Heart left ventricle (tissue), 16 donors: ENCODE measurements at regions of chr6 and their contacts with region 1.

Region 1: GRCh38 chr6:47309291-47310130 is at the start of gene TNFRSF21:
- DNase-seq: peak; percentile 92 to 94 (median 93)
- ATAC-seq: peak; percentile 98 to 100 (median 99)
- H3K4me3 ChIP-seq: peak within 1 kb of the TSS; percentile 60 to 79 (median 74)
- H3K27ac ChIP-seq: peak within 1 kb of the TSS; percentile 23 to 87 (median 62)
- H3K4me1 ChIP-seq: peaks cover 0 to 12% (median 3%) of the 10 kb centered on the region in 12 donors
- H3K27me3 ChIP-seq: peaks cover 0 to 32% (median 15%) of the 10 kb centered on the region in 9 donors
- CTCF ChIP-seq: peak; percentile 88 to 98 (median 96)
- POLR2A ChIP-seq: peak in 1 of 2 donors; percentile 75
- total RNA-seq, gene TNFRSF21: 3.7 to 18.1 (median 6.0) TPM

Region 2: GRCh38 chr6:46848684-46849360 is 460.7 kb before region 1 on chr6:
- intact Hi-C with region 1: loop called in 8 of 10 experiments (anchors 2 to 10 kb)
- DNase-seq: peak; percentile 84 to 94 (median 87)
- ATAC-seq: peak; percentile 65 to 96 (median 95)
- H3K4me3 ChIP-seq: peak overlapping the region in 5 of 12 donors; percentile 3 to 32 (median 26)
- H3K27ac ChIP-seq: no peak overlapping the region
- H3K4me1 ChIP-seq: peaks cover 0 to 44% (median 13%) of the 10 kb centered on the region in 12 donors
- H3K27me3 ChIP-seq: no peaks in the 10 kb centered on the region
- CTCF ChIP-seq: peak; percentile 93 to 99 (median 98)
- POLR2A ChIP-seq: no peak

Region 3: DNA sequence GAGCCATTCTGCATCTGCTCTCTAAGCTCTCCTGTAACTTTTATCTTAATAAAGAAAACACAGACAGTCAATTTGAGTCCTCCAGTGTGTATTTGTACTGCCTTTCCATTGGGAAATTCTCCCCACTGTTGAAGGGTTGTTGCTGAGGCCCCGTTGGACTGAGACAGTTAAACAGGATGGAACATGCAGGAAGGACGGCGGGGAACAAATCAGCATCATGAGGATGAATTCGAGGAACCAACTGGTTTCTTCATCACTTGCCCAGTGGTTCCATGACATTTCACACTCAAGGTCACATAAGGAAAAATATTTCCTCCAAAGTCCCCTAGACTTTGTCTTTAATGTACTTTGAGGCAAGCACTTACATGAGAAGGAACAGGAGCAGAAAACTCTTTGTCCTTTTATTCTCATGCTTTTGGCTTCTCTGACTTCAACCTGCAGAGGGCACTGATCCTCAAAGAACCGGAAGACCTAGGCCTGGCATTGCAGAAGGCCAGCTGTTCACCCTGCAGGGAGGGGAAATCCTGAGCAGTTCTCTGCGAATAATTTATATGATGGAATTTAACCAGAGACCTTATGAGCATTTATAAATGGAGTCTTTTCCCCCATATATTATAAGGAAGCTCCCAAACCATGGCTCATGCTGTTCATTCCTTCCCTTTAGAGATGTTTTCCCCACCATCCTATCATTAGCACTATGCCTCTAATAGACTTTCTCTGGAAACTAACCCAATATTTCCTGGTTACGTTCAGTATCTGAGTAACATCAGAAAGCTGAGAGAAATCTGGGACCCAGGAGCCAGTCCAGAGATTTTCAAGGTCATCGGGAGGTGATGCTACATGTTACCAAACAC is 212.2 kb before region 1 on chr6:
- intact Hi-C with region 1: loop called (anchors 1 to 2 kb)
- DNase-seq: peak in 4 of 5 donors; percentile 59 to 75 (median 68)
- ATAC-seq: peak; percentile 70 to 92 (median 90)
- H3K4me3 ChIP-seq: no peak overlapping the region
- H3K27ac ChIP-seq: peak overlapping the region in 2 of 12 donors; percentile 10 to 25
- H3K4me1 ChIP-seq: peaks cover 0 to 27% (median 8%) of the 10 kb centered on the region in 12 donors
- H3K27me3 ChIP-seq: no peaks in the 10 kb centered on the region
- CTCF ChIP-seq: peak; percentile 46 to 76 (median 64)
- POLR2A ChIP-seq: no peak

Region 4: DNA sequence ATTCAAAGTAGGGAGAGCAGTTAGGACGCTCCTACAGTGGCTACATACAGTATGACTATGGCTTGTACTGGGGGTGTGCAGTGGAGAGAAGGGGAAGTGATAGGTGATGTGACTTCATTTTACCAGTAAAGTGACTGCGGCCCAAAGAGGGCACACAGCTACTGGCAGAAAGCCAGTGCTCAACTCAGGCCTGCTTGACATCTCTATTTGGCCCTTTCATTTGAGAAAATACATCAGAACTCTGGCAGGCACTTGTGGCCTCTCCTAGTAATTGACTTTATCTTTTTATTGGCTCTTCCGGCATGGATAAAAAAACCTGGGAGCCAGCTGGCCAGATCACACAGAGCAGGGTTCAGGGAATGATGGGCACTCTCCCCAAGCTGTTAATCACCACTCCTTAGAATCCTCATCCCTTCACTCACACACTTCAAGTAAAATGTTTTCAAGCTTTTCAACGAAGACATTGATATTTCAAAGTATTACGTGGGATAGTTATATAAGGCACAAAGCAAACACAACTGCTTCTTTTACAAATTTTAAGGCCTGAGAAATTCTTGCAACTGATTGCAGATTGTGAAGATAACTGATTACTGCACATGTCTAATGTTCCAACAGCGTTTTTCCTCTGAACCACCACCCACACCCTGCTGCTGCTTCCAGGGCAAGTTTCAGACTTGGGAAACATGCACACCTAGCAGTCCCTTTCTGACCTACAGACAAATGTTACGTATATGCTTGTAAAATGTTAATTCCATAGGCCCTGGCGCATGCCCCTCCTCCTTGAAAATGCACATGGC is 73.3 kb before region 1 on chr6:
- intact Hi-C with region 1: loop called in 2 of 10 experiments (anchors 5 to 10 kb)
- DNase-seq: peak in 3 of 5 donors; percentile 28 to 57 (median 32)
- ATAC-seq: peak; percentile 70 to 90 (median 74)
- H3K4me3 ChIP-seq: no peak overlapping the region
- H3K27ac ChIP-seq: peak overlapping the region in 1 of 12 donors; percentile 23
- H3K4me1 ChIP-seq: peaks cover 0 to 23% (median 8%) of the 10 kb centered on the region in 12 donors
- H3K27me3 ChIP-seq: no peaks in the 10 kb centered on the region
- CTCF ChIP-seq: no peak
- POLR2A ChIP-seq: no peak

Region 5: DNA sequence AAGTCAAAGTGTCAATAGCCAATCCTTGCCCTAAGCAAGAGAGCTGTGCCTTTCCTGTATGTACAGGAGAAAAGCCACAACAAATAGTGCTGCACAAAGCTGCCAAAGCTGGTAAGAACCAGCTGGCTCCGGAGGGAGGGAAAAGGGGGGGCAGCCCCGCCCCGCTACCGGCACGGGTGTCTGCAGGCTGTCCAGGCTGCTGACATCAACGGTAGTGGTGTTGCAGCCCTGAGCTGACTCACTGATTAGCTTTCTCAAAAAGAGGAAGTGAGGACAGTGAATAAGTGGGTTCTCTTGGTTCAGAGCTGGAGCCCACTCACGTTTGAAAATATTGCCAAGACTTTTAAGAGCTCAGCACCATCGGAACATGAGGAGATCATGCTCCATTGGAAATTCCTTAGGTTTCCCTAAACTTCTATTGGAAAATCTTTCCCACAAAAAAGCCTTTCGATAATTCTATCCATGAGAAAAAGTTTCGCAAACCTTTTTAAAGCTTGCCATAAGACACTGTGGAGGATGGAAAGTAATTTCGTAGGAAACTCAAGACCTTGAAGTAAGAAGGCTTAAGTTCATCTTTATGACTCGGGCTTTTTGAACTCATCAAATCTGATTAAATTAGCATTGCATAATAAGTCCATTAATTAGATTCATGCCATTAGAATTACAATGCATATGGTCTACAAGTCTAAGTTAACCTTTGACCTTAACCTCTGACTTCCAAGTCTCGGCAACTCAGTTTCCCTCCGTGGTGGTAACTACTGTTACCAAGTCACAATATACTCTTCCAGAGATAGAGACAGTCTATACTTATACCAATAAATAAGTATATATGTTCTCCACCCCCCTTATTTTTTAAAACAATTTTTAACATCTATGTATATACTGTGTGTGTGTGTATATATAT is 66.8 kb before region 1 on chr6:
- intact Hi-C with region 1: loop called in 5 of 10 experiments (anchors 5 to 10 kb)
- DNase-seq: peak; percentile 85 to 92 (median 90)
- ATAC-seq: peak; percentile 96 to 99 (median 98)
- H3K4me3 ChIP-seq: peak overlapping the region in 1 of 12 donors; percentile 6
- H3K27ac ChIP-seq: peak overlapping the region in 8 of 12 donors; percentile 1 to 72 (median 34)
- H3K4me1 ChIP-seq: peaks cover 0 to 43% (median 29%) of the 10 kb centered on the region in 12 donors
- H3K27me3 ChIP-seq: no peaks in the 10 kb centered on the region
- CTCF ChIP-seq: no peak
- POLR2A ChIP-seq: no peak